ENCODE measurements at regions of chr14 and their contacts with region 1.

Region 1: GRCh38 chr14:75002392-75003249 is at the start of gene EIF2B2:
- DNase-seq: peak; percentile 99
- H3K4me3 Mint-ChIP-seq: peak within 1 kb of the TSS; percentile 99
- H3K27ac Mint-ChIP-seq: peak within 1 kb of the TSS; percentile 89
- H3K4me1 Mint-ChIP-seq: peaks cover 31% of the 10 kb centered on the region
- H3K27me3 Mint-ChIP-seq: no peaks in the 10 kb centered on the region
- total RNA-seq, gene EIF2B2: 64.8 to 65.4 TPM

Region 2: GRCh38 chr14:74793506-74794168 is 209.0 kb before region 1 on chr14:
- CTCF ChIA-PET with region 1: no interaction called
- intact Hi-C with region 1: loop called (anchors 2 kb)
- DNase-seq: peak; percentile 31
- H3K4me3 Mint-ChIP-seq: peak overlapping the region; percentile 60
- H3K27ac Mint-ChIP-seq: peak overlapping the region; percentile 81
- H3K4me1 Mint-ChIP-seq: peaks cover 40% of the 10 kb centered on the region
- H3K27me3 Mint-ChIP-seq: no peaks in the 10 kb centered on the region

Region 3: DNA sequence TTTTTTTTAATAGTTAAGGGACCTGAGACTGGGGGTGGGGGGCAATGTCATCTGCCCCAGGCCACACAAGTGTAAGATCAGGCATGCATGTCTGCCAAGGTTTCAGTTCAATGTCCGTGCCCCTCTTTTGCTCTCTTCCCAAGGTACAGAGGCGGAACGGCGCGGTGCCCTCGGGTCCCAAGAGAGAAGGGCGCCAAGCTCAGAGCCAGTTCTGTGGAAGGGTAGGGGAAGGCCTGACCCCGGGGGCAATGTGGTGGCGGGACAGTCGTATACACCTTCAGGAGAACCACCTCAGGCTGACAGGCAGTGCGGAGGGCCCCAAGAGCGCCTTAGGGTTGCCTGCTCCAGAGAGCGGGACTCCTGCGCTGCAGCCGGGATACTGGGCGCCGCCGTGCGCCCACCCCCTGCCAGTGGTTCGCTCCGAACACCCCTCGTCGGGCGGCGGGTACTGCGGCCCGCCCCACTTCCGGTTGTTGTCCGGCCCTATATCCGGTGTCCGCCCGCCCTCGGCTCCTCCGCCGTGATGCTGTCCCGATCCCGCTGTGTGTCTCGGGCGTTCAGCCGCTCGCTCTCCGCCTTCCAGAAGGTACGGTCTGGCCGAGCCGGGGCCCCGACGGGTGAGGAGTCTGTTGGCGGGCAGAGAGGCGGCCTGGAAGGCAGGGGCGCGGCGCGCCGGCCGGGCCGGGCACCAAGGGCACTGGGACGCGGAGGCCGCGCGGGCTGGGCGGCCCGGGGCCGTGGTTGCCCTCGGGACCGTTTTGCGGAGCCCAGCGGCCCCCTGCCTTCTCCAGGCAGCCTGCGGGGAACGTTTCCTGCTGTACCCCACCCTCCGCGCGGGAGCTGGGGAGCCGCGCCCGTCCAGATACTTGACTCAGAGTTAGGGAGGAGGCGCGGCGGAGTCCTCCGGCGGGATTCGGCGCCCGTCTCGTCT is 120.9 kb before region 1 on chr14 and contains the start of gene DLST:
- CTCF ChIA-PET with region 1: no interaction called
- intact Hi-C with region 1: loop called (anchors 1 kb)
- DNase-seq: peak; percentile 87
- H3K4me3 Mint-ChIP-seq: peak within 1 kb of the TSS; percentile 91
- H3K27ac Mint-ChIP-seq: peak within 1 kb of the TSS; percentile 94
- H3K4me1 Mint-ChIP-seq: peaks cover 63% of the 10 kb centered on the region
- H3K27me3 Mint-ChIP-seq: no peaks in the 10 kb centered on the region
- total RNA-seq, gene DLST: 126 to 132 TPM

Region 4: GRCh38 chr14:75063407-75064213 is 61.0 kb after region 1 on chr14 and contains the start of gene ACYP1:
- CTCF ChIA-PET with region 1: no interaction called
- intact Hi-C with region 1: loop called (anchors 1 kb)
- DNase-seq: peak; percentile 96
- H3K4me3 Mint-ChIP-seq: peak within 1 kb of the TSS; percentile 99
- H3K27ac Mint-ChIP-seq: peak within 1 kb of the TSS; percentile 94
- H3K4me1 Mint-ChIP-seq: peaks cover 23% of the 10 kb centered on the region
- H3K27me3 Mint-ChIP-seq: no peaks in the 10 kb centered on the region
- total RNA-seq, gene ACYP1: 46.3 to 50.5 TPM

Region 5: DNA sequence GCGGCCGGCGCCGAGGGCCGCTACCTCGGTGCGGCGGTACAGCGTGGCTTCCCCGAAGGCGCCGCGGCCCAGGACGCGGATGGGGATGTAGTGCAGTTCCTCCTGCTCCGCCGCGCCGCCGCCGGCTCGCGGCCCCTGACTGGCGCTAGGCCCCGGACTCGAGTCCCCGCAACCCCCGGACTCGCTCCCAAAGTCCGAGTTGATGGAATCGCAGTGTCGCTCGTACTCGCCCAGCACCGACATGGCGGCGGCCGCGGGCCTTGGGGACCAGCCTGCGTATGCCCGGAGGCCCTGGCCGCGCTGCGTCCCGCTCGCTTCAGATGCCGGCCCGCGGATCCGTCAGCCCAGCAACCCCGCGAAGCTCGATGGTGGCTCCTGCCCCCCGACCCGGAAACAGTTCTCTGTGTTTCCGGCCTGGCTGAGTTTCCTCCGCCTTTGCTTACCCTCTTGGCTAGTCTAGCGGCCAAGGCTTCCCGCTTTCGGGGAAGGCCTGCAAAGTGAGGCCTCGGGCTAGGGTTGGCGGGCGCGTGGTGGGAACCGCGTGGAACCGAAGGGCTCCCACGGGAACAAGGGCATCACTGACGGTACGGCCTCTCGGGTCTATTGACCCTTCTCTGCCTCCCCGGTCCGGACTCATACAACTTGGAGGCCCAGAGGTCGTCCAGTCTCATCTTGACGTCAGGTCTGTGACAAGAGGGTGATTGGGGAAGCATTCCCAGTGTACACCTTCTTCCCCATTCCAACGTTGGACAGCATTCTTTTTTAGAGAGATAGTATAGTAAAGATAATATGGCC is 124.3 kb after region 1 on chr14 and contains the start of gene NEK9:
- CTCF ChIA-PET with region 1: no interaction called
- intact Hi-C with region 1: loop called (anchors 1 kb)
- DNase-seq: peak; percentile 92
- H3K4me3 Mint-ChIP-seq: peak within 1 kb of the TSS; percentile 96
- H3K27ac Mint-ChIP-seq: peak within 1 kb of the TSS; percentile 97
- H3K4me1 Mint-ChIP-seq: peaks cover 40% of the 10 kb centered on the region
- H3K27me3 Mint-ChIP-seq: no peaks in the 10 kb centered on the region
- total RNA-seq, gene NEK9: 53.5 to 55.6 TPM

Region 6: DNA sequence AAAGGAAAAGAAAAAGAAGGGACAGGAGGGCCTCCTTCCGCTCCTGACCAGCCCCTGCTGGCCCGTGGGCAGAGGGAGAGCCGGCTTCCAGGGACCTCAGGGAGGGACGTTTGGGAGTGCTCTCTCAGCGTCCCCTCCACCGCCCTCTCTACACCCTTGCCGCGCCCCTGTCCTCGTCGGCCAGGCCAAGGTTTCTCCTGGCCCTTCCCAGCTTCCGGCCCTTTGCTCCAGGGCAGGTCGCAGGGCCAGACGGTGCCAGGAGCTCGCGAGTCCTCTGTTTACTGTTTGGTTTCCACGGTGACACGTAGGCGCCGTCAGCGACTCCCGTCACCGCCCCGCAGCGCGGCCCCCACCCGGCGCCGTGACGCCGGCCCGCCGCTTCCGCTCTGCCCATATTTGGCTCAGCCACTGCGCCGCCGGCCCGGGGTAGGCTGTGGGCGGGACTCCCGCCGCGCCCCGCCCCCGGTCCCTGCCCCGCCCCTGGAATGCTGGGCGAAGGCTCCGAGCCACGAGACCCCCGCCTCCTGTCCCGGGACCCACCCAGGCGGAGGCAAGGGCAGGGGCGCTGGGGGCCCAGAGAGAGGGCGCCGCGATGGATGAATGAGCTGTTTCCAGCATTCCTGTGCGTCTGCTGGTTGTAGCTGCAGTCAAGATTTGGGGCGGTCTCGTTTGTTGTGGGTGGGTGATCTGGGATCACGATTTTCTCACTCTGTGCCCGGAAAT is 291.5 kb after region 1 on chr14:
- CTCF ChIA-PET with region 1: no interaction called
- intact Hi-C with region 1: loop called (anchors 2 kb)
- DNase-seq: peak; percentile 91
- H3K4me3 Mint-ChIP-seq: peak overlapping the region; percentile 80
- H3K27ac Mint-ChIP-seq: no peak overlapping the region
- H3K4me1 Mint-ChIP-seq: peaks cover 20% of the 10 kb centered on the region
- H3K27me3 Mint-ChIP-seq: peaks cover 3% of the 10 kb centered on the region

Measured in activated naive CD4-positive, alpha-beta T cell treated with anti-CD3 and anti-CD28 coated beads for 36 hours (primary cell).